ENCODE measurements at regions of chr13 and their contacts with region 1.

Region 1: GRCh38 chr13:45807520-45808099 is 43.9 kb downstream of the SIAH3 start:
- DNase-seq: peak in 2 of 6 donors; percentile 28
- ATAC-seq: peak in 3 of 4 donors; percentile 68 to 84 (median 70)
- H3K4me3 ChIP-seq: no peak overlapping the region
- H3K27ac ChIP-seq: no peak overlapping the region
- H3K4me1 ChIP-seq: no peaks in the 10 kb centered on the region
- H3K27me3 ChIP-seq: no peaks in the 10 kb centered on the region
- CTCF ChIP-seq: peak in 2 of 4 donors; percentile 14 to 31

Region 2: GRCh38 chr13:45575146-45575829 is 232.3 kb before region 1 on chr13:
- intact Hi-C with region 1: no loop called
- DNase-seq: no peak
- ATAC-seq: no peak
- H3K4me3 ChIP-seq: no peak overlapping the region
- H3K27ac ChIP-seq: no peak overlapping the region
- H3K4me1 ChIP-seq: no peaks in the 10 kb centered on the region
- H3K27me3 ChIP-seq: no peaks in the 10 kb centered on the region
- CTCF ChIP-seq: no peak

Region 3: DNA sequence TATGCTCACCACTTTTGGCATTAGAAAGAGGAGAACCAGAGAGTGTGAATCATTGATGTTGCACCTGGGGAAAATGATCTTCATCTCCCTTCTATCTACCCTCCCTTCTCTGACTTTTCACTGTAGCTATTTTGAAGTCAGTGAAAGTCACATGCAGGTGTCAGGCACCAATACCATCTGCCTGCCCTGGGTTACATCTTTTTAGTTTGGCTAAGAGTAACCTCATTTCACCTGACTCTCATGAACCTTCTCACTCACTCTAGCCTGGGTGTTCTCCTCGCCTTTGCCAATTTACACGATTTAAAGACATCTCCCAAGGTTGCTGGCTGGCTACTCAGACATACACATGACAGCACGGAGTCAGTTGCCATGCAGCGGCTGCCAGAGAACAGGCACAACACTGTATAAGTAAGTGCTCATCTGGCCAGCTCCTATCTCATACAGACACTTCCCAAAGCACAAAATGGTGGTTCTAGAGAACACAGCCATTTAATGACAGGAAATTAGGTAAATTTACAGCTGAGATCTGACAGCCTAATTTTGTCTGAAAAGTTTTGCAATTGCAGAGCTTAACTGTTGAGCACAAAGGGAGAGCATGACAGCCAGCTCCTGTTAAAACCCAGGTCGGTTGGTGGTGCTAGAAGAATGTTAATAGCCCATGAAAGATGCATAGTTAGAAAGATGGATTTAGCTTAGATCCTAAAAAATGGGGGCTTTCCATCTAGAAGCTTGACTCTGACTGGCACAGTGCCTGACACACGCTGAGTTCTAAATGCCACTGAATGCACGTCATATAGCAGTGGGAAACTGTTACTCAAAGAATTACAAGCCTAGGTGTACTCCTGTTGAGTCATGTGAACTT is 341.9 kb after region 1 on chr13:
- intact Hi-C with region 1: loop called in 1 of 3 experiments (anchors 10 kb)
- DNase-seq: no peak
- ATAC-seq: no peak
- H3K4me3 ChIP-seq: no peak overlapping the region
- H3K27ac ChIP-seq: no peak overlapping the region
- H3K4me1 ChIP-seq: peaks cover 2 to 9% (median 6%) of the 10 kb centered on the region in 3 donors
- H3K27me3 ChIP-seq: no peaks in the 10 kb centered on the region
- CTCF ChIP-seq: no peak

Measured in pancreas (tissue), 10 donors.